Heart left ventricle (tissue), 16 donors: ENCODE measurements at regions of chr3 and their contacts with region 1.

Region 1: DNA sequence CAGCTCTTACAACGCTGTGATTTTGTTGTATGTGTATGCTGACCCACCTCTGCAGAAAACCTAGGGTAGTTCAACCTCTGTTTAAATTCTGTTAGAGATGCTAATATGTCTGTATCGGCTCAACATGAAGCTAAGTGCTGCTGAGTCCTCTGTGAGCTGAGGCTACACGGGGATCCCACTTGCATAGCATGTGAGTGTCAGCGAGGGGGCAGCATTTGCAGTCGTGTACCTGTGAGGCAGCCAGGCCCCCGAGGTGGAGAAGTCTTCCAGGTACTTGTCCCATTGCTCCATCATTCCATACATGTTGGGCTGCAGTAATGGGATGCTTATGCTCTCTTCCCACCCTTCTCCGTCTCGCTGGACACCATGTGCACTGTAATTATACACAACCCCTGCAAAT is 3.7 kb downstream of the MKRN2OS start:
- DNase-seq: peak in 2 of 5 donors; percentile 46 to 68
- ATAC-seq: peak in 2 of 4 donors; percentile 41 to 61
- H3K4me3 ChIP-seq: no peak overlapping the region
- H3K27ac ChIP-seq: no peak overlapping the region
- H3K4me1 ChIP-seq: no peaks in the 10 kb centered on the region
- H3K27me3 ChIP-seq: no peaks in the 10 kb centered on the region
- CTCF ChIP-seq: peak in 8 of 12 donors; percentile 21 to 42 (median 30)
- POLR2A ChIP-seq: no peak

Region 2: GRCh38 chr3:11705049-11705448 is 836.6 kb before region 1 on chr3:
- intact Hi-C with region 1: no loop called
- DNase-seq: no peak
- ATAC-seq: no peak
- H3K4me3 ChIP-seq: no peak overlapping the region
- H3K27ac ChIP-seq: no peak overlapping the region
- H3K4me1 ChIP-seq: peaks cover 0 to 5% (median 0%) of the 10 kb centered on the region in 12 donors
- H3K27me3 ChIP-seq: no peaks in the 10 kb centered on the region
- CTCF ChIP-seq: no peak
- POLR2A ChIP-seq: no peak

Region 3: DNA sequence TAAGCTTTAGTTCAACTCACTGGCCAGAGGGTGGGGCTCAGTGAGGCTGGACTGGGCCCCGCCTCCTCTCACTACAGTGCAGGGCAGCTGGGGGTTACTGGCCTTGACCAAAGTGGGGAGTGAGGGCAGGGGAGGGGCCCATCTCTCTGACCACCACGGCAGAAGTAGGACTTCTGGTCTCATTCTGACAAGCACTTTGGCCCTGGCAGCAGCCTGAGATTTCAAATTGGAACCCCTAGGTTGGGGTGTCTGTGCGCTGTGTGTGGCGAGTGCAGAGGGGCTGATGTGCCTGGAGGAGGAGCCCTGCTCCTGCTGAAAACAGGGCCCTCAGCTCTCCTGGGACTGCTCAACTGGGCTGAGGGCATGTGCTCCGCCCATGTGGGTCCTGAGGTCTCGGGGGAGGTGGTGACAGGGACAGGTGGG is 360.0 kb after region 1 on chr3:
- intact Hi-C with region 1: loop called in 1 of 10 experiments (anchors 10 kb)
- DNase-seq: peak in 3 of 5 donors; percentile 16 to 22 (median 21)
- ATAC-seq: no peak
- H3K4me3 ChIP-seq: no peak overlapping the region
- H3K27ac ChIP-seq: no peak overlapping the region
- H3K4me1 ChIP-seq: peaks cover 0 to 44% (median 22%) of the 10 kb centered on the region in 12 donors
- H3K27me3 ChIP-seq: no peaks in the 10 kb centered on the region
- CTCF ChIP-seq: peak in 1 of 12 donors; percentile 22
- POLR2A ChIP-seq: no peak